ENCODE measurements at regions of chr20 and their contacts with region 1.

Region 1: DNA sequence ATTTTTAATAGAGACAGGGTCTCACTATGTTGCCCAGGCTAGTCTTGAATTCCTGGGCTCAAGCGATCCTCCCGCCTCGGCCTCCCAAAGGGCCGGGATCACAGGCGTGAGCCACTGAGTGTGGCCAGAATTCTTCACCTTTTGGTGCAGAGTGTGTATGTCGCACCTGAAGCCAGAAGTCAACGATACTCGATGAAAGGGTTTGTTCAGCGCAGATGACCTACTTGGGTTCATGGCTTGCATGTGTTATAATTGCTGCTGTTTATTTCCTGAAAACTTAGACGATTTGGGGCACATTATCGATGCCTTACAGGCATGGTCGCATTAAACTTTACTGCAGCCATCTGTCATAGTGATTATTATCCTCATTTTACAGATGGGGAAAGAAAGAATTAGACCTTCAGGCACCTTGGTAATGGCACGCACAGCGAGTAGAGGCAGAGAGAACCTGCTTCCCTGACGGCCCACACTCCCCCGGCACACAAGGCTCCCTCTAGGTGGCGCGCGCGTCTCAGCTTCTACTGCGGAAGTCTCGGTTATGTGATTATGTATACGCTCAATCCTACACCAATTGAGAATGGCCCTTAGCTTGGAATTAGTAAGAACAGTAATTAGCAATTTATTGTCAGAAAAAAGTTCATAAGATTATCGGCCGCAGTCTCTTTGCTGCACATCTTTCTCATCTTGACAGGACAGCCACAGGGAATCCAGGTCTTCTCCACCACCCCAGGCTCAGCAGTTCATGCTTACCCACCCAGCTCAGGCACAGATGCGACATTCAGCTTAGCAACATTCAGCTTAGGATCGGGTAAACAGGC is 212.8 kb upstream of the PROKR2 start:
- DNase-seq: peak; percentile 96
- H3K4me3 Mint-ChIP-seq: peak overlapping the region; percentile 39
- H3K27ac Mint-ChIP-seq: peak overlapping the region; percentile 76
- H3K4me1 Mint-ChIP-seq: peaks cover 18% of the 10 kb centered on the region
- H3K27me3 Mint-ChIP-seq: no peaks in the 10 kb centered on the region

Region 2: DNA sequence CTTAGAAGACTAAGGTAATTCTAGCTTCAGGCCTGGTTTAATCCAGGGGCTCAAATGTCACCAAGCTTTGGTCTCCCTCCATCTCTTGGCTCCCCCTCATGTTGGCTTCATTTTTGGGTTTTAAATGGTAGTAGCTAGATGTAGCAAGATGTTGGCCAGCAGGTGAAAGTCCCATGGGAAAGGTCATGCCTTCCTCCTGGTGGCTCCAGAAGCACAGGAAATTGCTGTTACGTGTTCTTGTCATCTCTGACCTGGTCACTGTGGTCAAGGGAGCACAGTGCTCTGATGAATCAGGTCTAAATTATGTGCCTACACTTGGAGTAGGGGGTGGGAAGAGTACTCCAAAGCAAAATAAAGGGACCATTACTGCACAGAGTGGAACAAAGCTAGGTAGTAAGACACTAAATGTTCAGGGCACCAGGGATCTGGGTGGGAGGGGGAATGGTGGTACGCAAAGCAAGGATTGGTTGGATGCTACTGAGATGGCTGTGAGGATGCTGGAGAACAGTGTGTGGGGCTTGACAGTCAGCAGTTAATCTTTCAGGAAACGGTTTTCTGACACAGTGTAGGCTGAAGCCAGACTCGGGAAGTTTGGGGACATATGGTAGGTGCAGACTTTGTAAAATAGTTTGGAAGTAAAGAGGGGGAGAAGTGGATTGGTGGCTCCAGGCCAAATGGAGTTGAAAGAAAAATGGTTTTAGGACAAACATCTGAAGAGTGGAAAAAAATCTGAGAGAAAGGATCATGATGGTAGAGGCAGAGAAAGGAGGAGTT is 372.7 kb before region 1 on chr20:
- CTCF ChIA-PET with region 1: no interaction called
- intact Hi-C with region 1: no loop called
- DNase-seq: no peak
- H3K4me3 Mint-ChIP-seq: no peak overlapping the region
- H3K27ac Mint-ChIP-seq: no peak overlapping the region
- H3K4me1 Mint-ChIP-seq: peaks cover 58% of the 10 kb centered on the region
- H3K27me3 Mint-ChIP-seq: no peaks in the 10 kb centered on the region

Region 3: DNA sequence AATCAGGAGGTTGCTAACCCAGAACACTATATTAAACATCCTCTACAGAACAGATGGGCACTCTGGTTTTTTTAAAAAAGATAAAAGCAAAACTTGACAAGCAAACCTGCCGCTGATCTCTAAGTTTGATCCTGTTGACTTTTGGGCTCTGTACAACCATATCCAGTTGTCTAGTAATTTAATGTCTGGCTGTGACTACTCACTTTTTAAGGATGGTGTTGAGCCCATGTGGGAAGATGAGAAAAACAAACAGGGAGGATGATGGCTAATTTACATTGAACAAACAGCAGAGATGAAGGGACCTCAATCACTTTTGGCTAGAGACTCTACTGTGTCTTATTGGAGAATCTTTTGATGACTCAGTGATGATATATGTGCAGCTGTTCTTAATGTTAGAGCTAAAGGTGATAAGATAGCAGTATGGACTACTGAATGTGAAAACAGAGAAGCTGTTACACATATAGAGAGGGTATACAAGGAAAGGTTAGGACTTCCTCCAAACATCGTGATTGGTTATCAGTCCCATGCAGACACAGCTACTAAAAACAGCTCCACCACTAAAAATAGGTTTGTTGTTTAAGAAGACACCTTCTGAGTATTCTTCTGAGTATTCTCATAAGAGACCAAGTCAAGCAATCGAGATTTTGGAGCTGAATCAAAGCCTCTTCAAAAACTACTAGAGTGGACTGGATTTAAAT is 19.5 kb after region 1 on chr20:
- CTCF ChIA-PET with region 1: interaction called, 13 read pairs
- intact Hi-C with region 1: no loop called
- DNase-seq: no peak
- H3K4me3 Mint-ChIP-seq: no peak overlapping the region
- H3K27ac Mint-ChIP-seq: peak overlapping the region; percentile 52
- H3K4me1 Mint-ChIP-seq: peaks cover 37% of the 10 kb centered on the region
- H3K27me3 Mint-ChIP-seq: no peaks in the 10 kb centered on the region

Region 4: DNA sequence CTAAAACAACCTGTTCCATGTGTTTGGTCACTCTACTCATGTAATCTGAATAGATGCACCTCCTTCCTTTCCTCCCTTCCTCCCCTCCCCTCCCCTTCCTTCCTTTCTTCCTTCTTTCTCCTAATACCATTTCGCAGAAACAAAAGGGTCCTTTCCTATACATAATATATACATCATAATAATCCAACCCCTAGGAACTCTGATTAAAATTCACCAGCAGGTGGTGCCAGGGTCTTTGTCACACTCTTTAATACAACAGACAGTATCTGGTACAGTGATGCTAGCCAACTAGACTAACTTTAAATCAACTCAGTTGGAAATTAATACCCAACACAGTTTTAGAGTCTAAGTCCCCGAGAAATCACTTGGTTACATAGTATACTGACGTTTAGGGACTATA is 39.5 kb after region 1 on chr20:
- CTCF ChIA-PET with region 1: interaction called, 28 read pairs
- intact Hi-C with region 1: loop called (anchors 1 kb)
- DNase-seq: peak; percentile 78
- H3K4me3 Mint-ChIP-seq: no peak overlapping the region
- H3K27ac Mint-ChIP-seq: peak overlapping the region; percentile 82
- H3K4me1 Mint-ChIP-seq: peaks cover 31% of the 10 kb centered on the region
- H3K27me3 Mint-ChIP-seq: no peaks in the 10 kb centered on the region

Region 5: DNA sequence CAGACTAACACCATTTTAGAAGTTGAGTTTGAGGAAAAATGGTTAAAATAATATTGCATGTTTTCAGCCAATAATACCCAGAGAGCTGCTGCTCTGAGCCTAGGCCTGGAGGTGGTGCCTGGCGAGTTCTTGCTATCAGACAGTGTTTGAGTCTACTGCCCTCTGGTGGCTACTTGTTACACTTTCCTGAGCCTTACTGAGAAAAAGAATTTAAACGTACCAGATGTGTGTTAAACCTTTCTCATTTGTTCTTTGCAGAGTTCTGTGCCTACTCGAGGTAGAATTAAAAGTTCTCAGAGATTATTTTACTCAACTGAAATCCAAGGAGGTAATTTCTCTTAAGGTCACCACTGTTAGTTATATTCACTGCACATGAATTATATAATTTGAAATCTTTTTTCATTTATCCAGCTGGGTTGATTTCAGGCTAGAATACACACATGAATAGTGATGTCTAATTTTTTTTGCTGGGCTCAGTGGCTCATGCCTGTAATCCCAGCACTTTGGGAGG is 258.9 kb after region 1 on chr20:
- CTCF ChIA-PET with region 1: interaction called, 165 read pairs
- intact Hi-C with region 1: loop called (anchors 1 kb)
- DNase-seq: peak; percentile 90
- H3K4me3 Mint-ChIP-seq: no peak overlapping the region
- H3K27ac Mint-ChIP-seq: no peak overlapping the region
- H3K4me1 Mint-ChIP-seq: peaks cover 6% of the 10 kb centered on the region
- H3K27me3 Mint-ChIP-seq: no peaks in the 10 kb centered on the region

Region 6: DNA sequence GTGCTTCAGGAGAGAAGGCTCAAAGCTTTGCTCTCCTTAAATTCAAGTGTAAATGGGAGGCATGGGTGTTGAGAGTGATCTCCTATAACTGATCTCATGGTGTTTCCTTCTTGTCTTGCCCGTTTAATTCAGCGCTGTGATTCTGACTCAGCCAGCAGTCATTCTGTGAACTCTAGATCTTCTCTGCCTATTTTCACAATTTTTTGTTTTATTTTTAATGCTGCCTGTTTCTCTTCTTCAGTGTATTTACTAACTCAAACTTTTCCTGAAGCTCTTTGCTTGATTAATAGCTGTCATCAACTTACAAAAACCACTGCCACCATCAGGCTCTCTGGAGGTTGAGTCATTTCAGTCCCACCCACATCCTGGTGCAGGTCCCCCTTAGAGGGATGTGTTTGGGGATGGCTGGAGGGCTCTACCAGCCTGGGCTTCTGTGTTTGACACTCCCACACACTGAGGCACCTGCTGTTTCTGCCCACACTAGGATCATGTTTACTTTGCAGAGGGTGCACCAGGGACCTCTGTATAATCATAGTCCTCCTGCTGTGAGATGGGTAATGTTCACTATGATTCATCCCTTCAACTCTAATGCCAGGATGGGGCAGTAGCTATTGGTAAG is 314.6 kb after region 1 on chr20:
- CTCF ChIA-PET with region 1: interaction called, 4 read pairs
- intact Hi-C with region 1: loop called (anchors 1 kb)
- DNase-seq: peak; percentile 76
- H3K4me3 Mint-ChIP-seq: no peak overlapping the region
- H3K27ac Mint-ChIP-seq: peak overlapping the region; percentile 78
- H3K4me1 Mint-ChIP-seq: peaks cover 34% of the 10 kb centered on the region
- H3K27me3 Mint-ChIP-seq: no peaks in the 10 kb centered on the region

Region 7: GRCh38 chr20:5950271-5951031 is 420.9 kb after region 1 on chr20 and contains the starts of genes MCM8 and TRMT6:
- CTCF ChIA-PET with region 1: interaction called, 3 read pairs
- intact Hi-C with region 1: loop called (anchors 1 kb)
- DNase-seq: peak; percentile 98
- H3K4me3 Mint-ChIP-seq: peak within 1 kb of the TSS; percentile 97
- H3K27ac Mint-ChIP-seq: peak within 1 kb of the TSS; percentile 95
- H3K4me1 Mint-ChIP-seq: peaks cover 61% of the 10 kb centered on the region
- H3K27me3 Mint-ChIP-seq: no peaks in the 10 kb centered on the region
- total RNA-seq, gene MCM8: 49.6 to 50.3 TPM
- total RNA-seq, gene TRMT6: 11.5 to 11.8 TPM

Region 8: GRCh38 chr20:6074145-6074561 is 544.6 kb after region 1 on chr20:
- CTCF ChIA-PET with region 1: interaction called, 17 read pairs
- intact Hi-C with region 1: loop called (anchors 1 kb)
- DNase-seq: peak; percentile 9
- H3K4me3 Mint-ChIP-seq: no peak overlapping the region
- H3K27ac Mint-ChIP-seq: no peak overlapping the region
- H3K4me1 Mint-ChIP-seq: peaks cover 2% of the 10 kb centered on the region
- H3K27me3 Mint-ChIP-seq: no peaks in the 10 kb centered on the region

Measured in activated naive CD4-positive, alpha-beta T cell treated with anti-CD3 and anti-CD28 coated beads for 36 hours (primary cell).